HepG2 (cell line): ENCODE measurements at regions of chr9 and their contacts with region 1.

Region 1: DNA sequence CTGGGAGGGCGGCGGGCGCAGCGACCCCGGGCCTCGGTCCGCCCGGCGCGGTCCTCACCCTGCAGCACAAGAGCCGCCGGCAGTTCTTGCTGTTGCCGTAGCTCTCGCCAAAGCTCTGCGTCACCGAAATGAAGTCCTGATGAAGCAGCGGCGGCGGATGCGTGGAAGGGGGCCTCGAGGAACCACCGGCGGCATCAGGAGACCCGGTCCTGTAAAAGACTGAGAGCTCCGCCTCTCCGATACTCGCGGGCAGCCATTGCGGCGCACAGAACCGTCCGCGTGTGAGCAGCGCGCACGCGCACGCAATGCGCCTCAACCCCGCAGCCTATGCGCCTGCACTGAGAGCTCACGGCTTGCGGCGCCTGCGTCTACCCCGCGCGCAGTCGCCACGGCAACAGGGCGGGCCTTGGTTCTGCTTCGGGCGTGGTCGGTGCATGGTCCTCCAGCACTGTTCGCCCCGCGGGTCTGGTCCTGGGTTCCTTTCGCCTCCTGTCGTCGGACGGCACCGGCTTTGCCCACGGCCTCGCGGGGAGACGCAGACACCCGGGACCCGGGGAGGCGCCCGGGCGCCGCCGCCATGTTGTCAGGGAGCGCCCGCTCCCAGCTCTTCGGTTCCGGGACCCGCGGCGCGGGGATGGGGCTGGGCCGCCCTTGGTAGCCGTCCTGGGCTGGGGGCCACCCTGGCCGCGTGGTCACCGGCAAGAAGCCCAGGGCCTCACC is 9.3 kb upstream of the GRIN1 start:
- DNase-seq: peak; percentile 81
- ATAC-seq: peak; percentile 95
- H3K4me3 ChIP-seq: peak overlapping the region; percentile 75 to 90 (median 85)
- H3K27ac ChIP-seq: peak overlapping the region; percentile 82
- H3K4me1 ChIP-seq: peaks cover 24% of the 10 kb centered on the region
- H3K27me3 ChIP-seq: no peaks in the 10 kb centered on the region
- CTCF ChIP-seq: no peak; the same call in 1 of the 2 replicates
- EP300 ChIP-seq: no peak; a peak in 1 of 4 replicates
- POLR2A ChIP-seq: peak; percentile 73 to 91
- RAD21 ChIP-seq: peak; percentile 39

Region 2: GRCh38 chr9:137086531-137087408 is 42.8 kb before region 1 on chr9 and contains the start of gene MAN1B1:
- CTCF ChIA-PET with region 1: no interaction called
- POLR2A ChIA-PET with region 1: interaction called, 13 read pairs
- in situ Hi-C with region 1: no loop called
- intact Hi-C with region 1: no loop called
- DNase-seq: peak; percentile 97
- ATAC-seq: peak; percentile 87
- H3K4me3 ChIP-seq: peak within 1 kb of the TSS; percentile 77 to 89 (median 79)
- H3K27ac ChIP-seq: peak within 1 kb of the TSS; percentile 83
- H3K4me1 ChIP-seq: peaks cover 59% of the 10 kb centered on the region
- H3K27me3 ChIP-seq: no peaks in the 10 kb centered on the region; a peak in 1 of 5 replicates
- CTCF ChIP-seq: peak; percentile 45
- EP300 ChIP-seq: no peak
- POLR2A ChIP-seq: peak in 1 of 2 experiments; percentile 65; a peak in 2 of 4 replicates
- RAD21 ChIP-seq: peak; percentile 53; the same call in 1 of the 2 replicates
- total RNA-seq, gene MAN1B1: 19.0 and 48.9 TPM in 2 replicates

Region 3: DNA sequence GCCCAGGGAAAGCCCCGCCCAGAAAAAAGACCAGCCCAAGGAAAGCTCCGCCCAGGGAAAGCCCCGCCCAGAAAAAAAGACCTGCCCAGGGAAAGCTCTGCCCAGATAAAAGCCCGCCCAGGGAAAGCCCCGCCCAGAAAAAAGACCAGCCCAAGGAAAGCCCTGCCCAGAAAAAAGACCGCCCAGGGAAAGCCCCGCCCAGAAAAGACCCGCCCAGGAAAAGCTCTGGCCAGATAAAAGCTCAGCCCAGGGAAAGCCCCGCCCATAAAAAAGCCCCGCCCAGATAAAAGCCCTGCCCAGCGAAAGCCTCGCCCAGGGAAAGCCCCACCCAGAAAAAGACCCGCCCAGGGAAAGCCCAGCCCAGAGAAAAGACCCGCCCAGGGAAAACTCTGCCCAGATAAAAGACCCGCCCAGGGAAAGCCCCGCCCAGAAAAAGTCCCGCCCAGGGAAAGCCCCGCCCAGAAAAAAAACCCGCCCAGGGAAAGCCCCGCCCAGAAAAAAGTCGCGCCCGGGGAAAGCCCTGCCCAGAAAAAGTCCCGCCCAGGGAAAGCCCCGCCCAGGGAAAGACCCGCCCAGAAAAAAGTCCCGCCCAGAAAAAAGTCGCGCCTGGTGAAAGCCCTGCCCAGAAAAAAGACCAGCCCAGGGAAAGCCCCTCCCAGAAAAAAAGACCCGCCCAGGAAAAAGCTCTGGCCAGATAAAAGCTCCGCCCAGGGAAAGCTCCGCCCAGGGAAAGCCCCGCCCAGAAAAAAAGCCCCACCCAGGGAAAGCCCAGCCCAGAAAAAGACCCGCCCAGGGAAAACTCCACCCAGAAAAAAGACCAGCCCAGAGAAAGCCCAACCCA is 21.2 kb after region 1 on chr9:
- CTCF ChIA-PET with region 1: no interaction called
- POLR2A ChIA-PET with region 1: interaction called, 34 read pairs
- in situ Hi-C with region 1: no loop called
- intact Hi-C with region 1: no loop called
- DNase-seq: peak; percentile 84
- ATAC-seq: peak; percentile 19
- H3K4me3 ChIP-seq: no peak overlapping the region
- H3K27ac ChIP-seq: no peak overlapping the region
- H3K4me1 ChIP-seq: peaks cover 30% of the 10 kb centered on the region
- H3K27me3 ChIP-seq: peaks cover 8 to 38% of the 10 kb centered on the region in 2 experiments; a peak in 4 of 5 replicates
- CTCF ChIP-seq: no peak
- EP300 ChIP-seq: no peak
- POLR2A ChIP-seq: no peak
- RAD21 ChIP-seq: no peak

Region 4: DNA sequence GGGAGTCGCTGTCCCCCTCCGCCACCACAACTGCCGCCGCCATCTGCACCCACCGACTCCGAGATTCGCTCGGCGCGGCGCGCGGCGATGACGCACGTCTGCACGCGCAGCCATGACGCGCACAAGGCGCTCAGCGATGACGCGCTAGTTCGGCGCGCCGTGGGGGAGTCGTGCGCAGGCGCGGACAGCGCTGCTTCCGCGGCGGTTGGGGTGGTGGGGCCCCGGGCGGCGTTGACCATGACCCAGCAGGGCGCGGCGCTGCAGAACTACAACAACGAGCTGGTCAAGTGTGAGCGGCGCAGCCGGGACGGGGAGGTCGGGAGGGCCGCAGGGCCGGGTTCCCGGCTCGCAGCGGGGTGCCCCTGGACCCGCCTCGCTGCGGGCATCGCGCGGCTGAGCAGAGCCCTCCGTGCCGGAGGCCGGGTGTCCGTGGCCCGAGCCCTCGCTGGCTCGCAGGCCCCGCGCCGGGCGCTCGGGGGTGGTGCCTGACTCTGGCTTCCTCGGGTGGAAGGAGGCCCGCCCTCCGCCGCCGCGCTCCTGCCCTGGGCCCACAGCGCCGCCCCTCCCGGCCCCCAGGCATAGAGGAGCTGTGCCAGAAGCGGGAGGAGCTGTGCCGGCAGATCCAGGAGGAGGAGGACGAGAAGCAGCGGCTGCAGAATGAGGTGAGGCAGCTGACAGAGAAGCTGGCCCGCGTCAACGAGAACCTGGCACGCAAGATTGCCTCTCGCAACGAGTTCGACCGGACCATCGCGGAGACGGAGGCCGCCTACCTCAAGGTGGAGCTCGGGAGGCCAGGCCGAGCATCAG is 59.1 kb after region 1 on chr9 and contains the starts of genes ANAPC2 and SSNA1:
- CTCF ChIA-PET with region 1: no interaction called
- POLR2A ChIA-PET with region 1: interaction called, 12 read pairs
- in situ Hi-C with region 1: no loop called
- intact Hi-C with region 1: no loop called
- DNase-seq: peak; percentile 85
- ATAC-seq: peak; percentile 84
- H3K4me3 ChIP-seq: peak within 1 kb of the TSS; percentile 84 to 99 (median 97)
- H3K27ac ChIP-seq: peak within 1 kb of the TSS; percentile 81
- H3K4me1 ChIP-seq: peaks cover 28% of the 10 kb centered on the region
- H3K27me3 ChIP-seq: no peaks in the 10 kb centered on the region
- CTCF ChIP-seq: peak; percentile 88
- EP300 ChIP-seq: peak in 1 of 2 experiments; percentile 18; a peak in 1 of 4 replicates
- POLR2A ChIP-seq: peak in 1 of 2 experiments; percentile 41; a peak in 1 of 4 replicates
- RAD21 ChIP-seq: peak; percentile 92
- total RNA-seq, gene ANAPC2: 7.4 and 12.3 TPM in 2 replicates
- total RNA-seq, gene SSNA1: 41.2 and 49.4 TPM in 2 replicates

Region 5: GRCh38 chr9:137223078-137223970 is 93.7 kb after region 1 on chr9:
- CTCF ChIA-PET with region 1: no interaction called
- POLR2A ChIA-PET with region 1: interaction called, 24 read pairs
- in situ Hi-C with region 1: no loop called
- intact Hi-C with region 1: no loop called
- DNase-seq: peak; percentile 98
- ATAC-seq: peak; percentile 44
- H3K4me3 ChIP-seq: peak overlapping the region; percentile 84 to 99 (median 92)
- H3K27ac ChIP-seq: peak overlapping the region; percentile 76
- H3K4me1 ChIP-seq: peaks cover 64% of the 10 kb centered on the region
- H3K27me3 ChIP-seq: no peaks in the 10 kb centered on the region; a peak in 1 of 5 replicates
- CTCF ChIP-seq: no peak
- EP300 ChIP-seq: no peak
- POLR2A ChIP-seq: peak in 1 of 2 experiments; percentile 30; a peak in 1 of 4 replicates
- RAD21 ChIP-seq: peak; percentile 30; the same call in 1 of the 2 replicates

Region 6: GRCh38 chr9:137254624-137255447 is 125.2 kb after region 1 on chr9 and contains the start of gene NELFB:
- CTCF ChIA-PET with region 1: no interaction called
- POLR2A ChIA-PET with region 1: interaction called, 11 read pairs
- in situ Hi-C with region 1: no loop called
- intact Hi-C with region 1: no loop called
- DNase-seq: peak; percentile 76
- ATAC-seq: peak; percentile 53
- H3K4me3 ChIP-seq: peak within 1 kb of the TSS; percentile 91 to 98 (median 91)
- H3K27ac ChIP-seq: peak within 1 kb of the TSS; percentile 80
- H3K4me1 ChIP-seq: peaks cover 57% of the 10 kb centered on the region
- H3K27me3 ChIP-seq: no peaks in the 10 kb centered on the region; a peak in 1 of 5 replicates
- CTCF ChIP-seq: peak; percentile 50
- EP300 ChIP-seq: no peak
- POLR2A ChIP-seq: peak in 1 of 2 experiments; percentile 80; a peak in 2 of 4 replicates
- RAD21 ChIP-seq: peak; percentile 45; the same call in 1 of the 2 replicates
- total RNA-seq, gene NELFB: 38.7 and 45.8 TPM in 2 replicates

Region 7: GRCh38 chr9:137390543-137391410 is 261.2 kb after region 1 on chr9:
- CTCF ChIA-PET with region 1: no interaction called
- POLR2A ChIA-PET with region 1: no interaction called
- in situ Hi-C with region 1: no loop called
- intact Hi-C with region 1: no loop called
- DNase-seq: no peak
- ATAC-seq: no peak
- H3K4me3 ChIP-seq: no peak overlapping the region
- H3K27ac ChIP-seq: no peak overlapping the region
- H3K4me1 ChIP-seq: peaks cover 24% of the 10 kb centered on the region
- H3K27me3 ChIP-seq: no peaks in the 10 kb centered on the region
- CTCF ChIP-seq: no peak
- EP300 ChIP-seq: no peak
- POLR2A ChIP-seq: no peak
- RAD21 ChIP-seq: no peak

Region 8: DNA sequence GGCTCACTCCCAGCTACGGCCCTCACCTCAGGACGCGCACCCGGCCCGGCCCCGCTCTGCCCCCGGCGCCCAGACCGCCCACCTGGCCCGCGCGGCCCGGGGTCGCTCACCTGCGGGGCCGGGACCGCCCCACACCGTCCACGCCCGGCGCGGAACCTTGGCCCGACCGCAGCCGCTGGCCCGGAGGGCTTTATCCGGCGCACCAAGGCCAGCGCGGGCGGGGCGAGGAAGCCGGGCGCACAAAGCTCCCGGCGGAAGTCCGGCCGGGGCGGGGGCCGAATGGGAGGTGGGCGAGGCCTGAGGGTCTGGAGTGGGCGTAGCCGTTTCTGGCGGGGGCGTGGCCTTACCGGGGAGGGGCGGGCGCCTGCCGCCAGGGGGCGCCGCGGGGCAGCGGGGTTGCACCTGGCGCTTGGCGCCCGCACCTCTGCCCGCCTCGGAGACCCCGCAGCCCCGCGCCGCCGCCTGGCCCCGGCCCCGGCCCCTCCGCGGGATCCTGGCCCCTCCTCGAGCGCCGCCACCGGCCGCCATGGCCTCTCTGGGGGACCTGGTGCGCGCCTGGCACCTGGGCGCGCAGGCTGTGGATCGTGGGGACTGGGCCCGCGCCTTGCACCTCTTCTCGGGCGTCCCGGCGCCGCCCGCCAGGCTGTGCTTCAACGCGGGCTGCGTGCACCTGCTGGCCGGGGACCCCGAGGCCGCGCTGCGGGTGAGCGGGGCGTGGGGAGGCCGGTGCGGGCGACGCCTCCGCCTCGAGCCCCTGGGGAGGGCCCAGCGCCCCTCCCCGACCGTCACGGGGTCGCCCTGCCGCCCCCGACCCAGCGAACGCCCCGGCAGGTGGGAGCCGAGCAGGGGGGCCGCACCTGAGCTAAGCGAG is 293.6 kb after region 1 on chr9 and contains the starts of genes EXD3 and NOXA1:
- CTCF ChIA-PET with region 1: no interaction called
- POLR2A ChIA-PET with region 1: no interaction called
- in situ Hi-C with region 1: no loop called
- intact Hi-C with region 1: no loop called
- DNase-seq: peak; percentile 81
- ATAC-seq: peak; percentile 81
- H3K4me3 ChIP-seq: peak within 1 kb of the TSS; percentile 69 to 99 (median 96)
- H3K27ac ChIP-seq: peak within 1 kb of the TSS; percentile 69
- H3K4me1 ChIP-seq: peaks cover 21% of the 10 kb centered on the region
- H3K27me3 ChIP-seq: no peaks in the 10 kb centered on the region; a peak in 1 of 5 replicates
- CTCF ChIP-seq: peak; percentile 71
- EP300 ChIP-seq: no peak; a peak in 1 of 4 replicates
- POLR2A ChIP-seq: no peak
- RAD21 ChIP-seq: peak; percentile 87
- total RNA-seq, gene EXD3: 1.3 and 2.7 TPM in 2 replicates
- total RNA-seq, gene NOXA1: 0.63 and 1.2 TPM in 2 replicates